ENCODE measurements at regions of chr12 and their contacts with region 1.

Region 1: GRCh38 chr12:103930034-103930786 is at the start of gene HSP90B1:
- DNase-seq: peak; percentile 100
- ATAC-seq: peak; percentile 96
- total RNA-seq, gene HSP90B1: 402 TPM

Region 2: GRCh38 chr12:103538397-103538796 is 391.8 kb before region 1 on chr12:
- intact Hi-C with region 1: no loop called
- DNase-seq: no peak
- ATAC-seq: no peak

Region 3: GRCh38 chr12:103865151-103865730 is 65.0 kb before region 1 on chr12:
- intact Hi-C with region 1: no loop called
- DNase-seq: no peak
- ATAC-seq: no peak

Region 4: GRCh38 chr12:103877934-103878510 is 52.2 kb before region 1 on chr12:
- intact Hi-C with region 1: loop called (anchors 5 kb)
- DNase-seq: no peak
- ATAC-seq: peak; percentile 70

Region 5: DNA sequence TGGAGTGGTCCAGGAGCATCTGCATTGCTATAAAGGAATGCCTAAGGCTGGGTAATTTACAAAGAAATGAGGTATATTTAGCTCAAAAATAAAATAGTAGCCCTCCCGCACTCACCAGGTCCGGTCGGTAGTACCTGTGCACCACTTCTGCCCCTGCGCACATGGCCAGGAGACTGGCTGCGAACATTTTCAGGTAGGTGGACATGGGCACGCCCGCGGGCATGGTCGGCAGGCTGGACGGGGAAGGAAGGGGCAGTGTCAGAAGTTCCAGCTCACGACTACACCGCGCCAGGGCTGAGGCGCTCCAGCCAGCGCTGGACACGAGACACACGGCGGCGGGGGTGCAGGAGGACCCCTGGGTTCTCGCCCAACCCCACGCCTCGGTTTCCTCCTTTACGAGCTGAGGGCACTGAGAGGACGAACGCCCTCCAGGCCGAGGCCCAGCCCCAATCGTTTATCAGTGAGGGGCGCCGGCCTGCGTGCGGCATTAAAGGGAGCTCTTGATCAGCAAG is 26.4 kb after region 1 on chr12:
- intact Hi-C with region 1: loop called (anchors 2 kb)
- DNase-seq: peak; percentile 79
- ATAC-seq: peak; percentile 45

Region 6: GRCh38 chr12:103997286-103997900 is 67.2 kb after region 1 on chr12:
- intact Hi-C with region 1: no loop called
- DNase-seq: peak; percentile 74
- ATAC-seq: peak; percentile 89